HepG2 (cell line): ENCODE measurements at regions of chr9 and their contacts with region 1.

Region 1: GRCh38 chr9:115944166-115944948 is 209.2 kb upstream of the PAPPA start:
- DNase-seq: peak; percentile 99
- ATAC-seq: peak; percentile 96
- H3K4me3 ChIP-seq: peak overlapping the region in 2 of 3 experiments; percentile 10 to 43; a peak in 1 of 6 replicates
- H3K27ac ChIP-seq: peak overlapping the region; percentile 95
- H3K4me1 ChIP-seq: peaks cover 62% of the 10 kb centered on the region
- H3K27me3 ChIP-seq: no peaks in the 10 kb centered on the region
- CTCF ChIP-seq: no peak
- EP300 ChIP-seq: peak; percentile 70 to 82
- POLR2A ChIP-seq: peak; percentile 26 to 30; a peak in 1 of 4 replicates
- RAD21 ChIP-seq: no peak

Region 2: GRCh38 chr9:115395511-115396021 is 548.8 kb before region 1 on chr9:
- CTCF ChIA-PET with region 1: no interaction called
- POLR2A ChIA-PET with region 1: no interaction called
- in situ Hi-C with region 1: no loop called
- intact Hi-C with region 1: no loop called
- DNase-seq: no peak
- ATAC-seq: no peak
- H3K4me3 ChIP-seq: no peak overlapping the region
- H3K27ac ChIP-seq: no peak overlapping the region
- H3K4me1 ChIP-seq: no peaks in the 10 kb centered on the region
- H3K27me3 ChIP-seq: no peaks in the 10 kb centered on the region
- CTCF ChIP-seq: no peak
- EP300 ChIP-seq: no peak
- POLR2A ChIP-seq: no peak
- RAD21 ChIP-seq: no peak

Region 3: DNA sequence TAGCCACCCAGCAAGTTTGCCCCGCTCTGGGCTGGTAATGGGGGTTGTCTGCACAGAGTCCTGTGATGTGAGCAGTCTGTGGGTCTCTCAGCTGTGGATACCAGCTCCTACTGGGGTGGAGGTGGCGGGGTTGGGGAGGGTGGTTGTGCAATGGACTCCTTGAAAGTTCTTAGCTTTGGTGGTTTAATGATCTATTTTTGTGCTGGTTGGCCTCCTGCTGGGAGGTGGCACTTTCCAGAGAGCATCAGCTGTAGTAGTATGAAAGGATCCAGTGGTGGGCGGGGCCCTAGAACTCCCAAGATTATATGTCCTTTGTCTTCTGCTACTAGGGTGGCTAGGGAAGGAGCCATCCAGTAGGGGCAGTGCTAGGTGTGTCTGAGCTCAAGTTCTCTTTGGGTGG is 66.4 kb before region 1 on chr9:
- CTCF ChIA-PET with region 1: no interaction called
- POLR2A ChIA-PET with region 1: no interaction called
- in situ Hi-C with region 1: no loop called
- intact Hi-C with region 1: no loop called
- DNase-seq: no peak
- ATAC-seq: no peak
- H3K4me3 ChIP-seq: no peak overlapping the region
- H3K27ac ChIP-seq: no peak overlapping the region
- H3K4me1 ChIP-seq: no peaks in the 10 kb centered on the region
- H3K27me3 ChIP-seq: no peaks in the 10 kb centered on the region; a peak in 1 of 5 replicates
- CTCF ChIP-seq: no peak
- EP300 ChIP-seq: no peak
- POLR2A ChIP-seq: no peak
- RAD21 ChIP-seq: no peak

Region 4: GRCh38 chr9:115930509-115930908 is 13.8 kb before region 1 on chr9:
- CTCF ChIA-PET with region 1: no interaction called
- POLR2A ChIA-PET with region 1: no interaction called
- in situ Hi-C with region 1: no loop called
- intact Hi-C with region 1: no loop called
- DNase-seq: no peak
- ATAC-seq: no peak
- H3K4me3 ChIP-seq: no peak overlapping the region
- H3K27ac ChIP-seq: no peak overlapping the region
- H3K4me1 ChIP-seq: no peaks in the 10 kb centered on the region
- H3K27me3 ChIP-seq: no peaks in the 10 kb centered on the region
- CTCF ChIP-seq: no peak
- EP300 ChIP-seq: no peak
- POLR2A ChIP-seq: no peak
- RAD21 ChIP-seq: no peak

Region 5: DNA sequence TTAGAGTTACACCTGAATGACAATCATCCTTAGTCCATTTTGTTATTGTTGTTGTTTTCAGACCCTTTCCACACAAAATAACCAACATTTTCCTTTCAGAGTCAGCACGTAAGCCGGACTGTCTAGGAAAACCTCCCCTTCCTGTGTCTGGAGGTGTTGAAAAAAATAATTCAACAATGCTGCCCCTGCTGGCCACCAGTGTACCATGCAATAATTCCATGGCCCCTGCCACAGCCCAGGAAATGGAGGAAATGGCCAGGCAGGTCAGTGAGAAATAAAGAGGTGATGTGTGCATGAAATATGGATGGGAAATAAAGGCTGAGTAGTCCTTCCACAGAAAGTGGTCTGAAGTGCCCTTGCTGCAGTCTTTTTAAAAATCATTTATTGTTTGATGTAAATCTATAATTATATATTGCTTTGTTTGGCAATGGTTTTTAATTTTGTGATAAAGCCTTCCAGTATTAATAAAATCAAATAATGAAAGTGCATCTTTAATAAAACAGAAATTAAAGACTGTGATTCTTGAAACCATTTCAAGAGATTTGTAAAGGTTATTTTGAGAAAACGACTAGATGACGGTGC is 56.5 kb after region 1 on chr9:
- CTCF ChIA-PET with region 1: no interaction called
- POLR2A ChIA-PET with region 1: interaction called, 4 read pairs
- in situ Hi-C with region 1: no loop called
- intact Hi-C with region 1: loop called (anchors 5 kb)
- DNase-seq: peak; percentile 32
- ATAC-seq: peak; percentile 93
- H3K4me3 ChIP-seq: no peak overlapping the region
- H3K27ac ChIP-seq: no peak overlapping the region
- H3K4me1 ChIP-seq: peaks cover 9% of the 10 kb centered on the region
- H3K27me3 ChIP-seq: no peaks in the 10 kb centered on the region
- CTCF ChIP-seq: peak; percentile 68
- EP300 ChIP-seq: no peak
- POLR2A ChIP-seq: no peak
- RAD21 ChIP-seq: no peak

Region 6: GRCh38 chr9:116087246-116087645 is 142.9 kb after region 1 on chr9:
- CTCF ChIA-PET with region 1: no interaction called
- POLR2A ChIA-PET with region 1: no interaction called
- in situ Hi-C with region 1: no loop called
- intact Hi-C with region 1: no loop called
- DNase-seq: no peak
- ATAC-seq: no peak
- H3K4me3 ChIP-seq: no peak overlapping the region
- H3K27ac ChIP-seq: no peak overlapping the region
- H3K4me1 ChIP-seq: no peaks in the 10 kb centered on the region
- H3K27me3 ChIP-seq: no peaks in the 10 kb centered on the region
- CTCF ChIP-seq: no peak
- EP300 ChIP-seq: no peak
- POLR2A ChIP-seq: no peak
- RAD21 ChIP-seq: no peak

Region 7: DNA sequence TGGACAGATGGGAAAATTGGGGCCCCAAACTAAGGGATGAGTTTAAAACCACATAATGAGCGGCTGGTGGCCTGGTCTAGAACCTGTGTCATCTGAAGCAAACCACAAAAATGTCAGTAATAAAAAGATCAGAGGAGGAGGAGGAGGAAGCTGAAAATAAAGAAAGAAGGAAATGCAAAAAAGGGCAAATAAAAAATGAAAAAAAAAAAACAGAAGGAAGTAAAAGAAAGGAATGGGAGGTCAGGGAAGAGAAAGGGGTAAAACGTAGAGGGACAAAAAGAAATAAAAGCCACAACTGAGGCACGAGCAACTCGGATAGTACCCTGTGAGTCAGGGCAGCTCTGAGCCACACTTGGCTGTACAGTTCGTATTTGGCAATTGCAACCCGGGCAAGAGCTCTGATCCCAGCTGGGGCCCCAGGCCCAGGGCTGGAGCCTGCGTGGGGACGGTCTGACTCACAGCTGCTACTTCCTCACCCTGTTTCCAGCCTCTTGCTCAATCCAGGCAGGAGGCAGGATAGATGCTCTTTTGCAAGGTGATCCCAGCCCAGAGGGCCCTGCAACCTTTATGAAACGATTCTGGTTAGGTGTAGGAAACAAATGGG is 604.8 kb after region 1 on chr9:
- CTCF ChIA-PET with region 1: no interaction called
- POLR2A ChIA-PET with region 1: interaction called, 8 read pairs
- in situ Hi-C with region 1: no loop called
- intact Hi-C with region 1: loop called (anchors 5 kb)
- DNase-seq: peak; percentile 91
- ATAC-seq: peak; percentile 95
- H3K4me3 ChIP-seq: no peak overlapping the region
- H3K27ac ChIP-seq: peak overlapping the region; percentile 38
- H3K4me1 ChIP-seq: peaks cover 57% of the 10 kb centered on the region
- H3K27me3 ChIP-seq: no peaks in the 10 kb centered on the region
- CTCF ChIP-seq: 0 out of 2 replicates have a peak, but pooled peaks have one; percentile 20
- EP300 ChIP-seq: peak; percentile 71 to 75; a peak in 3 of 4 replicates
- POLR2A ChIP-seq: no peak
- RAD21 ChIP-seq: peak; percentile 51

Region 8: GRCh38 chr9:116566677-116567488 is 622.5 kb after region 1 on chr9:
- CTCF ChIA-PET with region 1: no interaction called
- POLR2A ChIA-PET with region 1: interaction called, 3 read pairs
- in situ Hi-C with region 1: loop called (anchors 10 kb)
- intact Hi-C with region 1: loop called (anchors 1 kb)
- DNase-seq: peak; percentile 96
- ATAC-seq: peak; percentile 96
- H3K4me3 ChIP-seq: peak overlapping the region in 1 of 3 experiments; percentile 47; a peak in 2 of 6 replicates
- H3K27ac ChIP-seq: peak overlapping the region; percentile 88
- H3K4me1 ChIP-seq: peaks cover 56% of the 10 kb centered on the region
- H3K27me3 ChIP-seq: no peaks in the 10 kb centered on the region
- CTCF ChIP-seq: no peak
- EP300 ChIP-seq: peak in 1 of 2 experiments; percentile 75; a peak in 2 of 4 replicates
- POLR2A ChIP-seq: peak in 1 of 2 experiments; percentile 55; a peak in 1 of 4 replicates
- RAD21 ChIP-seq: no peak; the same call in 1 of the 2 replicates

Region 9: GRCh38 chr9:116687074-116687753 is 742.9 kb after region 1 on chr9 and contains the start of gene TRIM32:
- CTCF ChIA-PET with region 1: no interaction called
- POLR2A ChIA-PET with region 1: interaction called, 6 read pairs
- in situ Hi-C with region 1: no loop called
- intact Hi-C with region 1: loop called (anchors 5 kb)
- DNase-seq: peak; percentile 86
- ATAC-seq: peak; percentile 98
- H3K4me3 ChIP-seq: peak within 1 kb of the TSS; percentile 81 to 91 (median 83)
- H3K27ac ChIP-seq: peak within 1 kb of the TSS; percentile 66
- H3K4me1 ChIP-seq: peaks cover 64% of the 10 kb centered on the region
- H3K27me3 ChIP-seq: no peaks in the 10 kb centered on the region; a peak in 1 of 5 replicates
- CTCF ChIP-seq: no peak
- EP300 ChIP-seq: no peak
- POLR2A ChIP-seq: peak; percentile 47 to 90; a peak in 3 of 4 replicates
- RAD21 ChIP-seq: no peak
- total RNA-seq, gene TRIM32: 7.7 and 11.6 TPM in 2 replicates